Endothelial cell of umbilical vein (primary cell): ENCODE measurements at regions of chr5 and their contacts with region 1.

Region 1: GRCh38 chr5:149345147-149345875 is at the start of gene GRPEL2:
- DNase-seq: peak; percentile 85
- H3K4me3 ChIP-seq: peak within 1 kb of the TSS; percentile 59 to 90 (median 63)
- H3K27ac ChIP-seq: peak within 1 kb of the TSS; percentile 71
- H3K4me1 ChIP-seq: peaks cover 42% of the 10 kb centered on the region
- H3K27me3 ChIP-seq: no peaks in the 10 kb centered on the region
- CTCF ChIP-seq: no peak
- POLR2A ChIP-seq: peak; percentile 83
- total RNA-seq, gene GRPEL2: 32.5 and 41.0 TPM in 2 replicates

Region 2: DNA sequence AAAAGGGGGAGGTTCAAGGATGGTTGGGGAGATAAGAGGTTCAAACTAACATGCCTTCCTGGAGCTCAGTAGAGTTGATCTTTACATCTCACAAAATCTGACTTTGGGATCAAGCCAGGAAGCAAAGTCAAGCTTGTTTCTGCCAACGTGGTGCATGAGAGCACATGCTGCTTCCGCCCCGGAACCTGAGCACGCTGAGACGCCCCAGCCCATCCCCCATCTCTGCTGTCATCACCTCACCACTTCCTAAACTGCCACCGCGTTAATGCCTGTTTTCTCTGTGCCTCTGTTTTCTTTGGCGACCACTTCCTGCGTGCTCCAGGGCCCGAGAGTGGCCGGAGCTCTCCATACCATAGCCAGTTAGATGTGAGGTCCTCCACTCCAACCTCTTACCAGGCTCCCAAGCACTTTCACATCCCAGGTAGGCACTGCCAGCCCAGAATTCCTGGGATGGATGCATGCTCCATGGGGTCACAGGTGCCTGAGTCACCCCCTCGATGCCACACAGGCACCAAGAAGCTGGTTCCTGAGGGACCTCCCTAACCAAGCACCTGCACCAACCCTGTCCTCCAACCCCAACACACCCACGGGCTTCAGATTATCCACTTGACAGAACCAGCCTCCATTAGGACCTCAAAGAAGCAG is 104.8 kb before region 1 on chr5:
- CTCF ChIA-PET with region 1: no interaction called
- POLR2A ChIA-PET with region 1: no interaction called
- dilution Hi-C with region 1: no loop called
- intact Hi-C with region 1: no loop called
- DNase-seq: no peak
- H3K4me3 ChIP-seq: no peak overlapping the region
- H3K27ac ChIP-seq: no peak overlapping the region
- H3K4me1 ChIP-seq: peaks cover 9% of the 10 kb centered on the region
- H3K27me3 ChIP-seq: no peaks in the 10 kb centered on the region
- CTCF ChIP-seq: no peak
- POLR2A ChIP-seq: no peak

Region 3: GRCh38 chr5:149288436-149288835 is 56.9 kb before region 1 on chr5:
- CTCF ChIA-PET with region 1: no interaction called
- POLR2A ChIA-PET with region 1: no interaction called
- dilution Hi-C with region 1: no loop called
- intact Hi-C with region 1: loop called (anchors 1 kb)
- DNase-seq: peak; percentile 70
- H3K4me3 ChIP-seq: no peak overlapping the region
- H3K27ac ChIP-seq: peak overlapping the region; percentile 86
- H3K4me1 ChIP-seq: peaks cover 27% of the 10 kb centered on the region
- H3K27me3 ChIP-seq: no peaks in the 10 kb centered on the region
- CTCF ChIP-seq: no peak
- POLR2A ChIP-seq: no peak

Region 4: GRCh38 chr5:149310947-149311658 is 34.2 kb before region 1 on chr5:
- CTCF ChIA-PET with region 1: interaction called, 4 read pairs
- POLR2A ChIA-PET with region 1: no interaction called
- dilution Hi-C with region 1: no loop called
- intact Hi-C with region 1: loop called (anchors 5 kb)
- DNase-seq: peak; percentile 78
- H3K4me3 ChIP-seq: no peak overlapping the region
- H3K27ac ChIP-seq: peak overlapping the region; percentile 77
- H3K4me1 ChIP-seq: peaks cover 23% of the 10 kb centered on the region
- H3K27me3 ChIP-seq: no peaks in the 10 kb centered on the region
- CTCF ChIP-seq: no peak
- POLR2A ChIP-seq: no peak

Region 5: DNA sequence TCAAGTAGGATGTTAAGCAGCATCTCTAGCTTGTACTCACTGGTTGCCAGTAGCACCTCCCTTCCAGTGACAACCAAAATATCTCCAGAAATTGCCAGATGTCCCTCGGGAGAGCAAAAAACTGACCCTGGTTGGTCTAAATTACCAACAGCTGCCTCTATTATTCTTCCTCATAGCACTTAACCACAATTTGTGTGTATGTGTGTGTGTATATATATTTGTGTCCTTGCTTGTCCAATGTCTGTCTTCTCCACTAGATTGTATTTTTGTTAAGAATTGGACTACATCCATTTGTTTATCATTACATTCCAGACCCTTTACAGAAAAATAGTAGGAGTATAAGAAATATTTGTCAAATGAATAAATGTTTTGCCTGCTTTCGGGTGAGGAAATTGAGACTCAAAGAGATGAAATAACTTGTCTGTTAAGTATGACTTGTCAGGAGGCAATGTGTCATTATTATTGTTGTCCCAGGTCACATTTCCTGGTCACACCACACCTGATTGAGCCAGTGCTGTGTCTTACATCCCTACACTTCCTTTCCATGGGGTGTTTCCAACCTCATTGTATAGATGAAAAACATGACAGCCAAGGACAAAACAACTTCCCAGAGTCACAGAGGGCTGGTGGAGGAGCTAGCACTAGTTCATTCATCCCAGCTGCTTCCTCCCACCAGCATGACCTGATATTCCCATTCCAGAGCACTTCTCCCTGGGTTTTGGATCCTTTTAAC is 11.4 kb before region 1 on chr5:
- CTCF ChIA-PET with region 1: interaction called, 11 read pairs
- POLR2A ChIA-PET with region 1: no interaction called
- dilution Hi-C with region 1: no loop called
- intact Hi-C with region 1: loop called (anchors 1 kb)
- DNase-seq: peak; percentile 79
- H3K4me3 ChIP-seq: no peak overlapping the region
- H3K27ac ChIP-seq: peak overlapping the region; percentile 68
- H3K4me1 ChIP-seq: peaks cover 20% of the 10 kb centered on the region
- H3K27me3 ChIP-seq: no peaks in the 10 kb centered on the region
- CTCF ChIP-seq: no peak
- POLR2A ChIP-seq: no peak

Region 6: DNA sequence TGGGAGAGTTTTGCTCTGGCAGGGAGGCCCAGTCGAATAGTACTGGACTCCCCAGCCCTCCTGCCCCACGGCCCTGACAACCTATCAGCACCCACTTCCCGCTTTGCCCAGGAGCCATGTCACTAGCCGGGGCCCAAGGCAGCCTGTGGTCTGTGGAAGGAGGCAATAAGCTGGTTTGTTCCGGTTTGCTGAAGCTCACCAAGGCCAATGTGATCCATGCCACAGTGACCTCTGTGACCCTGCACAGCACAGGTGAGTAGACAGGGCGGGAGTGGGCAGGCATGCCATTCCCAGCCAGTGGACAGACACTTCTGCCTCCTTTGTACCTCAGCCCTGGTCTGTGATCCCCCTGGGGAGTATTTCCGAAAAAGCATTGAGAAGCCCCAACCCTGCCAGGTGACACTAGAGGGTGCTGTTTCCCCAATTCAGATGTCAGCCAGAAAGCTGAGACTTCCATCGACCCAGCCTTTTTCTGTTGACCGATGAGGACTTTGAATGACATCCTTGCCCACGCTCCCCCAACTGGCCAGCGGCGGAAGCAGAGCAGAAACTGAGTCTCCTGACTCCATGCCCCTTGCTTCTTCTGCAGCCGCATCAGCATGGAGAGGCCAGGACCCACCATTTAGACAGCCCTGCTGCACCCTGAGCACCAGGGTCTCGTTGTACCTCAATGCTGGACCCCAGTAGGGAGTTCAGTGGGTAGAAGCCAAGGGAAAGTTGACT is 22.1 kb after region 1 on chr5:
- CTCF ChIA-PET with region 1: interaction called, 16 read pairs
- POLR2A ChIA-PET with region 1: interaction called, 5 read pairs
- dilution Hi-C with region 1: no loop called
- intact Hi-C with region 1: no loop called
- DNase-seq: peak; percentile 64
- H3K4me3 ChIP-seq: no peak overlapping the region
- H3K27ac ChIP-seq: no peak overlapping the region
- H3K4me1 ChIP-seq: no peaks in the 10 kb centered on the region
- H3K27me3 ChIP-seq: no peaks in the 10 kb centered on the region
- CTCF ChIP-seq: peak; percentile 76 to 83
- POLR2A ChIP-seq: no peak